Spleen (tissue), 13 donors: ENCODE measurements at regions of chr10 and their contacts with region 1.

Region 1: DNA sequence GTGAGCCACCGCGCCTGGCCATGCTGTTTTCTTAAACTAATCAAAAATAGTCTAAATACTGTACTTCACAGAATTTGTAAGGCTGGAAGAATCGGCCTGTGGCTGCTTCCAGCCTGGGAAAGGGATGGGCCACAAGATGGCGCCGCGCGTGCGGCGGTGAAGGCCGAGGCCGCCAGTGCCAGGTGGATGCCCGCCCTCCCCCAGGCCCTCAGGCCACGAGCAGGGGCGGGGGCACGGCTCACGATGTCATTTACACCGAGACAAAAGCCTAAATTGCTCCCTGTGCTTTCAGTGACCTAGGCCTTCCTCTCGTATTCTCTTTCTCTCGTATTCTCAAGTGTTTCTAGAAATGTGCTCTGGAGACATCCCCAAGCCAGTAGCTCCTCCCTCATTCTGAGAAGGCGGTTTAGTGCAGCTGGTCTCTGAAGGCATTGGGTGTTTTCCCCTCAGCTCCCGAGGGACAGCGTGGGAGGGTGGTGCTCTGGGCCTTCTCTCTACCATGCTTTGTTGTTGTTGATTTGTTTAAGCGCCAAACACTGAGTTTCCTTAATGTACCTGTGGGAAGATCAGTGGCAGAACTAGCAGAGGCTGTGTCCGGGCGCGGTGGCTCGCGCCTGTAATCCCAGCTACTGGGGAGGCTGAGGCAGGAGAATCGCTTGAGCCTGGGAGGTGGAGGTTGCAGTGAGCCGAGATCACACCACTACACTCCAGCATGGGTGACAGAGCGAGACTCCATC is 68.4 kb downstream of the CDC123 start:
- DNase-seq: peak; percentile 95
- H3K4me3 ChIP-seq: peak overlapping the region in 7 of 8 donors; percentile 9 to 64 (median 31)
- H3K27ac ChIP-seq: peak overlapping the region; percentile 53 to 88 (median 84)
- H3K4me1 ChIP-seq: peaks cover 12 to 57% (median 45%) of the 10 kb centered on the region in 6 donors
- H3K27me3 ChIP-seq: no peaks in the 10 kb centered on the region
- CTCF ChIP-seq: peak; percentile 52 to 88 (median 79)
- POLR2A ChIP-seq: peak in 1 of 3 donors; percentile 3

Region 2: GRCh38 chr10:12579954-12580858 is 315.8 kb after region 1 on chr10:
- intact Hi-C with region 1: loop called (anchors 10 kb)
- DNase-seq: no peak
- H3K4me3 ChIP-seq: no peak overlapping the region
- H3K27ac ChIP-seq: no peak overlapping the region
- H3K4me1 ChIP-seq: peaks cover 0 to 11% (median 3%) of the 10 kb centered on the region in 6 donors
- H3K27me3 ChIP-seq: no peaks in the 10 kb centered on the region
- CTCF ChIP-seq: no peak
- POLR2A ChIP-seq: no peak

Region 3: GRCh38 chr10:12650122-12650521 is 385.8 kb after region 1 on chr10:
- intact Hi-C with region 1: loop called (anchors 5 kb)
- DNase-seq: no peak
- H3K4me3 ChIP-seq: no peak overlapping the region
- H3K27ac ChIP-seq: no peak overlapping the region
- H3K4me1 ChIP-seq: no peaks in the 10 kb centered on the region
- H3K27me3 ChIP-seq: no peaks in the 10 kb centered on the region
- CTCF ChIP-seq: no peak
- POLR2A ChIP-seq: no peak

Region 4: DNA sequence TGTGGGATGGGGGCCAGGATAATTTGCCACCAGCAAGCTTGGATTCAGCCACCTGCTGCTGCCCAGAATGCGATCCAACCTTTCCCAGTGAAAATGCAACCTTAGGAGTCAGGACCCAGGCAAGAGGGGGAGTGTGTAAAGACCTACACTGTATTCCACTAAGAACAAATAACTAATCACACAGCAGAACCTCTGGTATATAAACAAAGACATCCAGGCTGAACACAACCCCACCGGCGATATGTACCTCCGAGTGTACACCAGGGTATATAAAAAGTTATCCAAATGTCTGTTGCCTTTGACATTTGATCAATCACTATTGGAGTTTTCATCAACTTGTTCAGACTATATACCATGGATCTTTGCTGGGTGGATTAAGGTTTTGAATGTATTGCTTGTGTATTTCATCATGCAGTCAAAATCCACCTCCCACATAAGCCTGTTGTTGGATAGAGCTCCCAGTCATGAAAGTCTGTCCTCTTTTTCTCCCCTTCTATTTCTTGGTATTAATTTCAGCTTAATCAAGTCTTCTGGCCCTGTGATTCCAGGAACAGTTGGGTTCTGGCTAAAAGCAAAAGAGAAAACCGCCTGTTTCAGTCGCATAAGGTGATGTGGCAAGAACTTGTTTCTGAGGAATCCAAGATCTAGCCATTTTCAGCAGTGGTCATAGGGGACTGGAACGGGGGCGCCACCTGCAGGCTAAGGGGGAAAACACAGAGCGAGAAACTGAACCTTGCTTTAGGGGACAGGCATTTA is 446.4 kb after region 1 on chr10:
- intact Hi-C with region 1: loop called (anchors 5 kb)
- DNase-seq: peak; percentile 89
- H3K4me3 ChIP-seq: no peak overlapping the region
- H3K27ac ChIP-seq: no peak overlapping the region
- H3K4me1 ChIP-seq: peaks cover 8 to 54% (median 31%) of the 10 kb centered on the region in 6 donors
- H3K27me3 ChIP-seq: no peaks in the 10 kb centered on the region
- CTCF ChIP-seq: peak; percentile 78 to 93 (median 88)
- POLR2A ChIP-seq: no peak